Lower lobe of right lung (tissue), 2 donors: ENCODE measurements at regions of chr3 and their contacts with region 1.

Region 1: GRCh38 chr3:126982471-126983175 is at the start of gene PLXNA1:
- DNase-seq: peak; percentile 87
- ATAC-seq: peak; percentile 92 to 95
- H3K4me3 ChIP-seq: peak within 1 kb of the TSS; percentile 66
- H3K27ac ChIP-seq: peak within 1 kb of the TSS; percentile 83
- H3K4me1 ChIP-seq: peaks cover 26% of the 10 kb centered on the region
- H3K27me3 ChIP-seq: no peaks in the 10 kb centered on the region
- CTCF ChIP-seq: peak; percentile 97
- total RNA-seq, gene PLXNA1: 48.1 TPM

Region 2: DNA sequence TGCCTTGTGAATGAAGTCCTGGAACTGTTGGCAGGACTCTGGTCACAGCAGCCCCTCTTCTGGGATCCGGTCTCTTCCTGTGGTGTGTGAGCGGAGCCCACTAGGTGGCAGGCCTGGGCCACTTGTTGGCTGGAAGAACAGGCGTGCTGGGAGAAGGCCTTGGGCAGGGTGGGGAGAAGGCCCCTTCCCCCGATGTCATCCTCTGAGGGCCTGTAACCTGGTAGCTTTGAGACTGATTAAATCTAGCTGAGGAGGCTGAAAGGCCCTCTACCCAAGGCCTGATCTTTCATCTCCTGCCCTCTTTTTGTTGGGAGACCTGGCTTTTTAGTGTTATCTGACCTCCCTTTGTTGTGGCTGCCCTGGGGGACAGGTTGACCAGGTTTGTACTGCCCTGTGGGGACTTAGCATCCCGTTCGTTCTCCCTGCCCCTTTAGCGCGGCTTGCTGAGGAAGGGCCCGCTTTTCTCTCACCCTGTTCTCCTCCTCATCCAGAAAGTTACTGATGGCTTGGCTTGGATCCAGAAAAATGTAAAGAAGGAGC is 230.2 kb before region 1 on chr3:
- intact Hi-C with region 1: loop called (anchors 5 kb)
- DNase-seq: peak; percentile 84
- ATAC-seq: peak; percentile 88 to 90
- H3K4me3 ChIP-seq: no peak overlapping the region
- H3K27ac ChIP-seq: peak overlapping the region; percentile 58
- H3K4me1 ChIP-seq: peaks cover 24% of the 10 kb centered on the region
- H3K27me3 ChIP-seq: no peaks in the 10 kb centered on the region
- CTCF ChIP-seq: peak; percentile 88

Region 3: GRCh38 chr3:126845920-126846715 is 136.5 kb before region 1 on chr3:
- intact Hi-C with region 1: no loop called
- DNase-seq: no peak
- ATAC-seq: no peak
- H3K4me3 ChIP-seq: no peak overlapping the region
- H3K27ac ChIP-seq: no peak overlapping the region
- H3K4me1 ChIP-seq: no peaks in the 10 kb centered on the region
- H3K27me3 ChIP-seq: no peaks in the 10 kb centered on the region
- CTCF ChIP-seq: no peak